ENCODE measurements at regions of chr22 and their contacts with region 1.

Region 1: GRCh38 chr22:43427296-43428004 is 15.6 kb downstream of the MPPED1 start:
- DNase-seq: no peak
- H3K4me3 ChIP-seq: no peak overlapping the region
- H3K27me3 ChIP-seq: peaks cover 3% of the 10 kb centered on the region; the same call in 1 of the 2 replicates
- CTCF ChIP-seq: no peak

Region 2: DNA sequence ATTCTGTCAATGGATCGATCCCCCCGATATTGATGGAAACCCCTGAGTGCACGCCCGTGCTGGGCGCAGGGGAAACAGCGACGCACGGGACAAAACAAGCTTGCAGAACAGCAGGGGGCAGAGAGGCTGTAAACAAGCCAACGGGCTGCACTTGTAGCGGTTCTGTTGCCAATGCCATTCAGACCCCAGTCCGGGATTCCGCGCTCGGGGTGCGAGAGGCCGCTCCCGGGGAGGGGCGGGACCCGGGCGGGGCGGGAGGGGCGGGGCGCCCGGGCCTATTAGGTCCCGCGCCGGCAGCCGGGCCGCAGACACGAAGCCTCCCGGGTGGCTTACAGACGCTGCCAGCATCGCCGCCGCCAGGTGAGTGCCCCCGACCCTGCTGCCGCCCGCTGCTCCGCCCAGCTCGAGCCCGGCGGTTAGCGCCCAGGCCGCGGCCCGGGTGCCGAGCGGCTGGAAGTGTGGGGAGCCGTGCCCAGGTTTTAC is 317.0 kb before region 1 on chr22 and contains the start of gene BIK:
- CTCF ChIA-PET with region 1: no interaction called
- POLR2A ChIA-PET with region 1: no interaction called
- DNase-seq: no peak
- H3K4me3 ChIP-seq: peak within 1 kb of the TSS; percentile 24
- H3K27me3 ChIP-seq: peaks cover 42% of the 10 kb centered on the region
- CTCF ChIP-seq: peak; percentile 32
- polyA plus RNA-seq, gene BIK: 0.09 TPM in 2 replicates

Region 3: DNA sequence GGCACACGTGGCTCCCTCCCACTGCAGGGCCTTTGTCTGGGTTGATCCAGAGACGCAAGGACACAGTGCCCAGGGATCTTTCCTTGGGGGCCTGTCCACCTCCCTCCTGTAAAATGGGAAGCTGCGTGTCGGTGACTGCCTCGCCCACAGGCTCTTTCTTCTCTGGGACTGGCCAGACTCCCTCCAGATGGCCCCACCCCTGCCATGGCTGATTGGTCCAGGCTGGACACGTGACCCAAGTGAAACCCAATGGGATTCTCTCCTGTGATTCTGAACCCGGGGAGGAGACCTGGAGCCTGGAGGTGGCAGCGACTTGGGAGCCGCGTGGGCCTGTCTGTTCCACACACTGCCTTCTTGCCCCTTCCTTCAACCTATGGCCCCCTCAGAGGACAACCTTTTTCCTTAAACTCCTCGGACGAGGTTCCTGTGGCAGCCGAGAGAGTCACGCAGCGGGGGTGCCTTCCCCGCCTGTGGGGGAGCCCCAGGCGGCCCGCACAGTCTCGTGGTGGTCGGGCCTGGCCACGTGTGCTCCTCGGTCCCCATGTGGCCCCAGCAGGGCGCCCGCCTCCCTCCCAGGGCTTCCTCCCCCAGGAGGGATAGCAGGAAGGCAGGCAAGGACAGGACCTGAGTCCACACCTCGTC is 28.0 kb before region 1 on chr22:
- CTCF ChIA-PET with region 1: no interaction called
- POLR2A ChIA-PET with region 1: no interaction called
- DNase-seq: no peak
- H3K4me3 ChIP-seq: no peak overlapping the region
- H3K27me3 ChIP-seq: no peaks in the 10 kb centered on the region; the same call in 1 of the 2 replicates
- CTCF ChIP-seq: no peak

Region 4: GRCh38 chr22:43412808-43413795 is 14.3 kb before region 1 on chr22:
- CTCF ChIA-PET with region 1: no interaction called
- POLR2A ChIA-PET with region 1: interaction called, 22 read pairs
- DNase-seq: no peak
- H3K4me3 ChIP-seq: no peak overlapping the region
- H3K27me3 ChIP-seq: peaks cover 32% of the 10 kb centered on the region
- CTCF ChIP-seq: no peak

Region 5: GRCh38 chr22:43537014-43537585 is 109.7 kb after region 1 on chr22:
- CTCF ChIA-PET with region 1: no interaction called
- POLR2A ChIA-PET with region 1: no interaction called
- DNase-seq: no peak
- H3K4me3 ChIP-seq: no peak overlapping the region
- H3K27me3 ChIP-seq: no peaks in the 10 kb centered on the region
- CTCF ChIP-seq: no peak

Measured in BJ (cell line).